ENCODE measurements at regions of chr20 and their contacts with region 1.

Region 1: GRCh38 chr20:5529331-5530148 is 212.8 kb upstream of the PROKR2 start:
- H3K4me3 ChIP-seq: no peak overlapping the region
- H3K27ac ChIP-seq: no peak overlapping the region
- H3K4me1 ChIP-seq: no peaks in the 10 kb centered on the region
- CTCF ChIP-seq: peak; percentile 63; the same call in 1 of the 2 replicates

Region 2: GRCh38 chr20:5543385-5543784 is 13.8 kb after region 1 on chr20:
- CTCF ChIA-PET with region 1: interaction called, 13 read pairs
- POLR2A ChIA-PET with region 1: no interaction called
- H3K4me3 ChIP-seq: no peak overlapping the region
- H3K27ac ChIP-seq: no peak overlapping the region
- H3K4me1 ChIP-seq: no peaks in the 10 kb centered on the region
- CTCF ChIP-seq: no peak

Region 3: GRCh38 chr20:5557123-5557522 is 27.6 kb after region 1 on chr20:
- CTCF ChIA-PET with region 1: interaction called, 44 read pairs
- POLR2A ChIA-PET with region 1: no interaction called
- H3K4me3 ChIP-seq: no peak overlapping the region
- H3K27ac ChIP-seq: no peak overlapping the region
- H3K4me1 ChIP-seq: no peaks in the 10 kb centered on the region
- CTCF ChIP-seq: 0 out of 2 replicates have a peak, but pooled peaks have one; percentile 21

Region 4: GRCh38 chr20:5933802-5934436 is 404.4 kb after region 1 on chr20:
- CTCF ChIA-PET with region 1: interaction called, 15 read pairs
- POLR2A ChIA-PET with region 1: no interaction called
- H3K4me3 ChIP-seq: no peak overlapping the region
- H3K27ac ChIP-seq: no peak overlapping the region
- H3K4me1 ChIP-seq: no peaks in the 10 kb centered on the region
- CTCF ChIP-seq: 0 out of 2 replicates have a peak, but pooled peaks have one; percentile 13